Natural killer cell (primary cell): ENCODE measurements at regions of chr16 and their contacts with region 1.

Region 1: DNA sequence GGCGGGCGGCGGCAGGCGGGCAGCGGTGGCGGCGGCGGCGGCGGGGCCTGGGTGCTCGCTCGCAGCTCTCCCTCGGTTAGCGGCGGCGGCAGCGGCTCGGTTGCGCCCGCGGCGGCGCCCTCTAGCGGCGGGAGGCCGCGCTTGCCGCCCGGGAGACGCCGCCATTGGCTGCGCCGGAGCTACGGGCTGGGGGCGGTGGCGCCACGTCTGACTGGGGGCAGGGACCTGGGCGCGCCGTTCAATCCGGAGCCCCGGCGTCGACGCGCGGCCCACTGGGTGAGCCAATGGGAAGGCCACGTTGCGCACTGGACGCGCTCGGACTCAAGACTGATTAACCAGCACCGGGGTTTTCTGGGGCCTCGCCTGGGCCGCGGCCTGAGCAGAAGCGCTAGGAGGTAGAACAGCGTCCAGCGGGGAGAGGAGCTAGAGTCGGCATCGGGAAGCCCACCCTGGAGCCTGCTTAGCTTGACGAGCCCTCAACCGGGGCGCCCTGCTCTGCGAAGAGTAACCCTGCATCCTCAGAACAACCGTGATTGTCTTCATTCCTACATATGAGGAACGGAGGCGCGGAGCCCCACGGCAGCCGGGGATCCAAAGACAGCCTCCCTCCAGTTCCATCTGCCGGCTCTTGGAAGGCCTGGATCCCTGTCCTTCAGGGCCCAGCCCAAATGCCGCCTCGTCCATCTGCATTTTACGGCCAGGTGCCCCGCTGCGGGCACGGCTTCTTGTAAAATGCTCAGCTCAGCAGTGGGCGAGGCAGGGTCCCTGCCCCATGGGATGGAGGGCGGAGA is at the start of gene ZC3H7A:
- DNase-seq: peak; percentile 93 to 97
- ATAC-seq: peak; percentile 95 to 99 (median 97)
- H3K4me3 ChIP-seq: peak within 1 kb of the TSS; percentile 91
- H3K4me3 Mint-ChIP-seq: peak within 1 kb of the TSS; percentile 94
- H3K27ac ChIP-seq: peak within 1 kb of the TSS; percentile 93
- H3K27ac Mint-ChIP-seq: peak within 1 kb of the TSS; percentile 96 to 98
- H3K4me1 ChIP-seq: peaks cover 38% of the 10 kb centered on the region
- H3K4me1 Mint-ChIP-seq: peaks cover 54 to 59% of the 10 kb centered on the region in 2 donors
- H3K27me3 ChIP-seq: no peaks in the 10 kb centered on the region
- H3K27me3 Mint-ChIP-seq: no peaks in the 10 kb centered on the region
- CTCF ChIP-seq: peak; percentile 66
- total RNA-seq, gene ZC3H7A: 80.6 to 91.8 (median 84.6) TPM

Region 2: DNA sequence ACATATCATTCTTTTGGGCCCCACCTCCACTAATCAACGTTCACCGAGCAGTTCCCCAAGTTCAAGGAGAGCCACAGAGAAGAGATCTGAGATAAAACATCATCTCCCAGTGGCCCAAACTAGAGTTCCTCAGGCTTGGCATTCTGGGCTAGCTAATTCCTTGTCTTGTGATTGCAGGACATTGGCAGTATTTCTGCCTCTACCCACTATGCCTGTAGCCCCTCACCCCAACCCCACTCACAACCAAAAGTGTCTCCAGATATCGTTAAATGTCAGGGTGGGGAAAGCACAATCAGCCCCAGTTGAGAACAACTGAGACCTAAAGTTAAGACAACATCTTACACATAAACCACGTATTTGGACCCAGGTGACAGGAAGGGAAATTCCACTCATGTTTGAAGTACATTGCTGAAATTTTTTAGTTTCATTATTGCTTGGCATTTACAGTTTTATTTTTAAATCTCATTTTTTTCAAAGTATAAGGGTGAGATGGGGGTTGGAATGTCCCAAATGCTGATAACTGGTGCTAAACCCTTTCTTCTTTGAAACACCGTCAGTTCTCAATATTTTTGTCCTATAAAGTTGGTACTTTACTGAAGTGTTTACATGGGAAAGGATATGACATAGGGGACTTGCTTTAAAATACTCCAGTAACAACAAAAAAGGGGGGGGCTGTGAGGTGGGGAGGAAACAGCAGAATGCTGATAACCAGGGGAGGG is 13.9 kb before region 1 on chr16:
- intact Hi-C with region 1: loop called (anchors 1 kb)
- DNase-seq: peak; percentile 39 to 91
- ATAC-seq: peak; percentile 83 to 90 (median 84)
- H3K4me3 ChIP-seq: peak overlapping the region; percentile 30
- H3K4me3 Mint-ChIP-seq: peak overlapping the region; percentile 89
- H3K27ac ChIP-seq: peak overlapping the region; percentile 99
- H3K27ac Mint-ChIP-seq: peak overlapping the region; percentile 99 to 100
- H3K4me1 ChIP-seq: peaks cover 30% of the 10 kb centered on the region
- H3K4me1 Mint-ChIP-seq: peaks cover 47 to 51% of the 10 kb centered on the region in 2 donors
- H3K27me3 ChIP-seq: no peaks in the 10 kb centered on the region
- H3K27me3 Mint-ChIP-seq: no peaks in the 10 kb centered on the region
- CTCF ChIP-seq: no peak